ENCODE measurements at regions of chr1 and their contacts with region 1.

Region 1: GRCh38 chr1:70247768-70248167 is 26.6 kb downstream of the SRSF11 start:
- DNase-seq: no peak
- ATAC-seq: no peak
- H3K4me3 Mint-ChIP-seq: no peak overlapping the region
- H3K27ac Mint-ChIP-seq: no peak overlapping the region
- H3K4me1 Mint-ChIP-seq: peaks cover 28% of the 10 kb centered on the region
- H3K27me3 Mint-ChIP-seq: no peaks in the 10 kb centered on the region

Region 2: GRCh38 chr1:71019233-71019969 is 771.6 kb after region 1 on chr1:
- CTCF ChIA-PET with region 1: no interaction called
- POLR2A ChIA-PET with region 1: interaction called, 10 read pairs
- DNase-seq: no peak
- ATAC-seq: no peak
- H3K4me3 Mint-ChIP-seq: no peak overlapping the region
- H3K27ac Mint-ChIP-seq: no peak overlapping the region
- H3K4me1 Mint-ChIP-seq: no peaks in the 10 kb centered on the region
- H3K27me3 Mint-ChIP-seq: peaks cover 6% of the 10 kb centered on the region